ENCODE measurements at regions of chr5 and their contacts with region 1.

Region 1: DNA sequence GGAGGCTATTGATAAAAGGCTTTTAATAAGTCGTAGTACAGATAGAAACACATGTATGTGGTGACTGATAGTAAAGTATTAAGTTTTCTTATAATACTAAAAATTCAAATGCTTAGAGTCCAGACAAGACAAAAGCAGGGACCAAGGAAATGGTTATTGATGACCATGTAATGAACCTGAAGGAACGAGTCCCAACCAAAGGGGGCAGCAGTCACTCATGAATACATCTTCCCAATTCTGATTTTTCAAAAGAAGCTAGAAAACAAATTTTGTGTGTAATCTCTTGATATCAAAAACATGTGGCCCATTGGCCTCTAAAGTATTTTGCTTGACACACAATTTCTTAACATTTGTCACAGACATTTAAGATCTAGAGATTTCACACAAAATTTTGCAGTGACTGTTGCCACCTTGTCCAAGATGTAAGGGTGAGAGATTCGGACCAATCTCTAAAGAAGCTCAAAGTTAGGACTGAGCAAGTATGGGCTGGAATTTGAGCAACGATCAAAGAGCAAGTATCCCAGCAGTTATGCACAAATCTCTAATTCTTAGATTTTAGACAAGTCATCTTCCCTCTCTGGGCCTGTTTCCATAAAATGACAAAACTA is 66.8 kb downstream of the ARL15 start:
- DNase-seq: peak in 2 of 10 donors; percentile 32 to 36
- H3K4me3 ChIP-seq: no peak overlapping the region
- H3K27ac ChIP-seq: no peak overlapping the region
- H3K27me3 ChIP-seq: no peaks in the 10 kb centered on the region
- CTCF ChIP-seq: peak; percentile 43 to 86 (median 74)

Region 2: GRCh38 chr5:54379590-54379989 is 136.0 kb after region 1 on chr5:
- intact Hi-C with region 1: no loop called
- DNase-seq: no peak
- H3K4me3 ChIP-seq: no peak overlapping the region
- H3K27ac ChIP-seq: no peak overlapping the region
- H3K27me3 ChIP-seq: peaks cover 0 to 8% (median 0%) of the 10 kb centered on the region in 45 donors
- CTCF ChIP-seq: no peak

Region 3: GRCh38 chr5:54492178-54492577 is 248.6 kb after region 1 on chr5:
- intact Hi-C with region 1: loop called in 1 of 2 experiments (anchors 10 kb)
- DNase-seq: no peak
- H3K4me3 ChIP-seq: no peak overlapping the region
- H3K27ac ChIP-seq: no peak overlapping the region
- H3K27me3 ChIP-seq: peaks cover 0 to 4% (median 0%) of the 10 kb centered on the region in 45 donors
- CTCF ChIP-seq: no peak

Region 4: GRCh38 chr5:54867310-54867944 is 623.9 kb after region 1 on chr5:
- intact Hi-C with region 1: loop called in 1 of 2 experiments (anchors 10 kb)
- DNase-seq: no peak
- H3K4me3 ChIP-seq: peak overlapping the region in 21 of 59 donors; percentile 2 to 44 (median 26)
- H3K27ac ChIP-seq: no peak overlapping the region
- H3K27me3 ChIP-seq: peaks cover 0 to 4% (median 0%) of the 10 kb centered on the region in 45 donors
- CTCF ChIP-seq: peak; percentile 65 to 91 (median 78)

Measured in dorsolateral prefrontal cortex (tissue), 120 donors.